ENCODE measurements at regions of chr2 and their contacts with region 1.

Region 1: GRCh38 chr2:180125245-180125962 is 118.3 kb upstream of the CWC22 start:
- DNase-seq: peak; percentile 48
- H3K4me3 ChIP-seq: no peak overlapping the region; a peak in 1 of 4 replicates
- H3K27ac ChIP-seq: peak overlapping the region in 1 of 2 experiments; percentile 2; a peak in 1 of 4 replicates
- H3K4me1 ChIP-seq: peaks cover 2 to 3% of the 10 kb centered on the region in 2 experiments; a peak in 2 of 4 replicates
- H3K27me3 ChIP-seq: no peaks in the 10 kb centered on the region
- CTCF ChIP-seq: peak; percentile 70
- EP300 ChIP-seq: no peak; a peak in 1 of 4 replicates
- RAD21 ChIP-seq: peak; percentile 89

Region 2: GRCh38 chr2:181058378-181059269 is 933.2 kb after region 1 on chr2:
- CTCF ChIA-PET with region 1: interaction called, 12 read pairs
- POLR2A ChIA-PET with region 1: no interaction called
- DNase-seq: peak; percentile 3
- H3K4me3 ChIP-seq: no peak overlapping the region; a peak in 1 of 4 replicates
- H3K27ac ChIP-seq: no peak overlapping the region
- H3K4me1 ChIP-seq: no peaks in the 10 kb centered on the region
- H3K27me3 ChIP-seq: no peaks in the 10 kb centered on the region
- CTCF ChIP-seq: peak; percentile 60
- EP300 ChIP-seq: no peak
- RAD21 ChIP-seq: peak; percentile 73

Region 3: GRCh38 chr2:181457121-181457740 is 1331.8 kb after region 1 on chr2 and contains the start of gene ITGA4:
- CTCF ChIA-PET with region 1: interaction called, 22 read pairs
- POLR2A ChIA-PET with region 1: no interaction called
- DNase-seq: peak; percentile 92
- H3K4me3 ChIP-seq: peak within 1 kb of the TSS; percentile 74 to 82
- H3K27ac ChIP-seq: peak within 1 kb of the TSS in 1 of 2 experiments; percentile 42; a peak in 1 of 4 replicates
- H3K4me1 ChIP-seq: peaks cover 0 to 14% of the 10 kb centered on the region in 2 experiments; a peak in 2 of 4 replicates
- H3K27me3 ChIP-seq: no peaks in the 10 kb centered on the region
- CTCF ChIP-seq: peak; percentile 71
- EP300 ChIP-seq: no peak
- RAD21 ChIP-seq: peak; percentile 79
- polyA plus RNA-seq, gene ITGA4: 10.5 and 12.5 TPM in 2 replicates

Measured in SK-N-SH (cell line).